ENCODE measurements at regions of chr2 and their contacts with region 1.

Region 1: DNA sequence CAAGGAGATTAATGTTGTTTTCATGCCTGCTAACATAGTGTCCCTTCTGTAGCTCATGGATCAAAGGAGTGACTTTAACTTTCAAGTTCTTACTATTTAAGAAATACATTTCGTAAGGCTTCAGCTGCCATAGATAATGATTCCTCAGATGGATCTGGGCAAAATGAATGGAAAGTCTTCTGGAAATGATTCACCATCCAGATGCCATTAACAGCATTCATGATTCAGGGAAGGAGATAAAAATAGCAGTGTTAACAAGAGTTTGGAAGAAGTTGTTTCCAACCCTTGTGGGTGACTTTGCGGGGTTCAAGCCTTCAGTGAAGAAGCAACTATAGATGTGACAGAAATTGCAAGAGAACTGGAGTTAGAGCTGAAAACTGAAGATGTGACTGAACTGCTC is 17.0 kb downstream of the VRK2 start:
- DNase-seq: no peak
- ATAC-seq: no peak
- H3K4me3 Mint-ChIP-seq: no peak overlapping the region
- H3K27ac Mint-ChIP-seq: no peak overlapping the region
- H3K4me1 Mint-ChIP-seq: peaks cover 20% of the 10 kb centered on the region
- H3K27me3 Mint-ChIP-seq: no peaks in the 10 kb centered on the region
- CTCF ChIP-seq: no peak

Region 2: GRCh38 chr2:58073751-58074150 is 10.1 kb after region 1 on chr2:
- CTCF ChIA-PET with region 1: no interaction called
- POLR2A ChIA-PET with region 1: interaction called, 3 read pairs
- intact Hi-C with region 1: loop called (anchors 2 kb)
- DNase-seq: no peak
- ATAC-seq: no peak
- H3K4me3 Mint-ChIP-seq: no peak overlapping the region
- H3K27ac Mint-ChIP-seq: no peak overlapping the region
- H3K4me1 Mint-ChIP-seq: peaks cover 28% of the 10 kb centered on the region
- H3K27me3 Mint-ChIP-seq: no peaks in the 10 kb centered on the region
- CTCF ChIP-seq: no peak

Measured in activated B cell treated with CpG ODN at 0.5 μM for 24 hours (primary cell).